Activated CD8-positive, alpha-beta memory T cell treated with anti-CD3 and anti-CD28 coated beads, Interleukin-2, amount 10 ng/mL, durations not matched to agents 7 days and 5 days (primary cell): ENCODE measurements at regions of chr1 and their contacts with region 1.

Region 1: GRCh38 chr1:225911191-225912130 is 12.6 kb downstream of the PYCR2 start:
- DNase-seq: peak; percentile 74
- ATAC-seq: peak; percentile 93
- H3K4me3 Mint-ChIP-seq: no peak overlapping the region
- H3K27ac Mint-ChIP-seq: no peak overlapping the region
- H3K4me1 Mint-ChIP-seq: no peaks in the 10 kb centered on the region
- H3K27me3 Mint-ChIP-seq: no peaks in the 10 kb centered on the region

Region 2: GRCh38 chr1:225777583-225778336 is 133.7 kb before region 1 on chr1 and contains the start of gene SRP9:
- CTCF ChIA-PET with region 1: interaction called, 26 read pairs
- DNase-seq: peak; percentile 100
- ATAC-seq: peak; percentile 99
- H3K4me3 Mint-ChIP-seq: no peak within 1 kb of the TSS
- H3K27ac Mint-ChIP-seq: no peak within 1 kb of the TSS
- H3K4me1 Mint-ChIP-seq: peaks cover 29% of the 10 kb centered on the region
- H3K27me3 Mint-ChIP-seq: no peaks in the 10 kb centered on the region
- total RNA-seq, gene SRP9: 198 to 225 TPM

Region 3: GRCh38 chr1:225881969-225882693 is 29.3 kb before region 1 on chr1 and contains the start of gene TMEM63A:
- CTCF ChIA-PET with region 1: interaction called, 34 read pairs
- DNase-seq: peak; percentile 92
- ATAC-seq: peak; percentile 87
- H3K4me3 Mint-ChIP-seq: peak within 1 kb of the TSS; percentile 82
- H3K27ac Mint-ChIP-seq: peak within 1 kb of the TSS; percentile 87
- H3K4me1 Mint-ChIP-seq: peaks cover 35% of the 10 kb centered on the region
- H3K27me3 Mint-ChIP-seq: peaks cover 5% of the 10 kb centered on the region
- total RNA-seq, gene TMEM63A: 50.4 to 58.7 TPM

Region 4: DNA sequence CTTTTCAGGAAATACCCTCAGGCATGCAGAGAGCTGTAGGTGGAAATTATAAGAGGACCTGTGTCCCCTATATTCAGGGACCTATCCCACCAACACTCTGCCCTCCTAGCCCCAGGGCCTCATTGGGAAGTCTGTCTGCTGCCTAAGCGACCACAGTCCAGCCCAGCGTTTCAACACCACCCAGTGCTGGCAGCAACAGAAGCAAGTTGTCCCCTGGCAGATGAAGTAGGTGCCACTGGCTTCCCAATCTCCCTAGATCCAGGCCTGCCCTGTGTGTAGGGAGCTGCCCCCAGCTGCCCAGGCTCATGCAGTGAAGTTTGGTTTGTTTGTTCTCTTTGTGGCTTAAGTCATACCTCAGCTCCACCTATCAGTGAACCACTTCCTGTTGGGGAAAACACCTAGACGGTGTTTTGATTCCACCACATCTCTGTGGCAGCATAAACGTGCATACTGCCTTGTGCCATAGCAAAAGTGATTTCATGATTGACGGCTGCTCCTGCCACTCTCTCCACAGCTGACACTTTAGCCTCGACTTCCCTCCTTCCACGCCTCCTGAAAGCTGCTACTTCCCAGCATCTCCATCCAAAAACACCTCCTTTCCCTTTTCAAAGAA is 14.4 kb before region 1 on chr1:
- CTCF ChIA-PET with region 1: interaction called, 12 read pairs
- DNase-seq: peak; percentile 89
- ATAC-seq: peak; percentile 96
- H3K4me3 Mint-ChIP-seq: peak overlapping the region; percentile 22
- H3K27ac Mint-ChIP-seq: peak overlapping the region; percentile 29
- H3K4me1 Mint-ChIP-seq: peaks cover 29% of the 10 kb centered on the region
- H3K27me3 Mint-ChIP-seq: peaks cover 24% of the 10 kb centered on the region

Region 5: DNA sequence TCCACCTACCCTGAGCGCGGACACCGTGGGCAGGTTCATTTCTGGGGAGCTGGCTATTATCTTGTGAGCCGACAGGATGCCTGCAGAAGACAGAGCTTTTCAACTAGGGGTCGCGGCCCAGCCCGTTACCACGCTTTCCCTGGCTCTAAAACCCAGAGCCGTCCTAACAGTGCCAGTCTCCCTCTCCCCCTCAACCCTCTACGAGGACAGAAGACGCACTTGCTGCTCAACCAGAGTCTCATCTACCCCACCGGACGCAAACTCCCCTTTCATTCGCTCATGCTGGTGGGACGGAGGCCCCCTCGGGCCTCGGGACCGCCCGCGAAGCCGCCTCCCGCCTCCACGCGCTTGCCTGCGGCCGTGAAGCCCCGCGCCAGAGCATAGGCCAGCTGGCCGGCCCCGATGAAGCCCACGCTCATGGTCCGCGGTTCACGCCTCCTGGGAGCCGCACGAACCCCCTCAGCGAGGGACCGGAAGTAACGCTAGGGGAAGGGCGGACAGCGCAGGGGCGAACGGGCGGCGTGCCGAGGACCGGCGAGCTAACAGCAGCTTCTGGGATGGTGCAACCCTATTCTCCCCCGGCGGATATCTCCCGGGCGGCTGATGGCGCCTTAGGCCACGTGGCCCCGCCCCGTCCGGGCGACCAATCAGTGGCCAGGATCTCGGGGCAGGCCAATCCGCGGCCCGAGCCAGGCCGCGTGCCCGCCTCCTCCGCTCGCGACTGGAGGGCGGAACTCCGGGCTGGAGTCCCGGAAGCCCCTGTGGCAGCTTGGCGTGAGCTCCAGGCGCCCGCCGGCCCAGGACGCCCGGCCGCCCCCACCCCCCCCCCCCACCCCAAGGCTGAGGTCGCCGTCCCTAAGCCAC is 12.5 kb after region 1 on chr1 and contains the start of gene PYCR2:
- CTCF ChIA-PET with region 1: interaction called, 36 read pairs
- DNase-seq: peak; percentile 96
- ATAC-seq: peak; percentile 99
- H3K4me3 Mint-ChIP-seq: peak within 1 kb of the TSS; percentile 96
- H3K27ac Mint-ChIP-seq: peak within 1 kb of the TSS; percentile 93
- H3K4me1 Mint-ChIP-seq: peaks cover 44% of the 10 kb centered on the region
- H3K27me3 Mint-ChIP-seq: no peaks in the 10 kb centered on the region
- total RNA-seq, gene PYCR2: 103 to 106 TPM

Region 6: GRCh38 chr1:225944951-225945350 is 33.5 kb after region 1 on chr1:
- CTCF ChIA-PET with region 1: interaction called, 10 read pairs
- DNase-seq: no peak
- ATAC-seq: peak; percentile 79
- H3K4me3 Mint-ChIP-seq: no peak overlapping the region
- H3K27ac Mint-ChIP-seq: peak overlapping the region; percentile 25
- H3K4me1 Mint-ChIP-seq: peaks cover 10% of the 10 kb centered on the region
- H3K27me3 Mint-ChIP-seq: peaks cover 9% of the 10 kb centered on the region

Region 7: DNA sequence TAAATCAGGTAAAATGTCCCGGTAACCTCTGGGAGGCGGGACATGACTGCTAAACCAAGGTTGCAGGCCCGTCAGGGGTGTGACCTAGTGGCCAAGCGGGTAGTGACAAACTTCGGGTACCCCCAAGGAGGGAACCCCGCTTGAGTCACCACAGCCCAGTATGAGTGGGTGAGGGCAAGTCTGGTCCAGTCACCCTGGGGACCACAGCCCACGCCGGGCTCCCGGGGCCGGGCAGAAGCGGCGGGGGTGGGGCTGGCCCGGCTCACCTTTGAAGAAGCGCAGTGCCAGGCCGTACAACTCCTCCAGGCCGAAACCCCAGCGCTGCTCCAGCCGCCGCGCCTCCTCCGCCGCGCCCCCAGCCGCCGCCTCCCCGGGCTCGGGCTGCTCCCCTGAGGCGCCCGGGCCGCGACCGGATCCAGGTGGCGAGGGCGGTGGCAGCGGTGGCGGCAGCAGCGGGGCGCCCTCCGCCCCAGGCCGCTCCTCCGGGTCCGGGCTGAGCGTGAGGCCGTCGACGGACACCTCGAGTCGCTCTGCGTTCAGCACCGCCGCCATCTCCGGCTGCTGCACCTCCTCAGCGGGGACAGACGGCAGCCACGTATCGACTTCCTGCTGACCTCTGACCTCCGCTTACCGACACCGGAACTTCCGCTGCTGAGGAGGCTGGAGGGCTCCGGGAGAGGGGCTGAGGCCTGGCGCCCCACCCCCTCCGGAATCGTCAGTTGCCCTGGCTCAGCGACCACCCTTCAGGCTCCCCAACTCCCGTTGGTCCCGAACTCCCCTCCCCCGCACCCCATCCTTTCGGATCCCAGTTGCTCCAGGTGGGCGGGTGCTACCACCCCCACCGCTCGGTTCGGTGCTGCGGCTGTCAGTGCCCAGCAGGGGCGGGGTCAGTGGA is 274.9 kb after region 1 on chr1 and contains the start of gene ACBD3:
- CTCF ChIA-PET with region 1: no interaction called
- DNase-seq: peak; percentile 93
- ATAC-seq: peak; percentile 97
- H3K4me3 Mint-ChIP-seq: peak within 1 kb of the TSS; percentile 97
- H3K27ac Mint-ChIP-seq: peak within 1 kb of the TSS; percentile 93
- H3K4me1 Mint-ChIP-seq: peaks cover 32% of the 10 kb centered on the region
- H3K27me3 Mint-ChIP-seq: no peaks in the 10 kb centered on the region
- total RNA-seq, gene ACBD3: 19.4 to 20.0 TPM